PC-3 (cell line): ENCODE measurements at regions of chr4 and their contacts with region 1.

Region 1: GRCh38 chr4:91826186-91826585 is 477.6 kb upstream of the GRID2 start:
- DNase-seq: peak; percentile 92
- ATAC-seq: peak; percentile 99
- H3K4me3 ChIP-seq: peak overlapping the region; percentile 43
- H3K27ac ChIP-seq: peak overlapping the region; percentile 86
- H3K4me1 ChIP-seq: peaks cover 22% of the 10 kb centered on the region
- H3K27me3 ChIP-seq: no peaks in the 10 kb centered on the region
- CTCF ChIP-seq: no peak

Region 2: DNA sequence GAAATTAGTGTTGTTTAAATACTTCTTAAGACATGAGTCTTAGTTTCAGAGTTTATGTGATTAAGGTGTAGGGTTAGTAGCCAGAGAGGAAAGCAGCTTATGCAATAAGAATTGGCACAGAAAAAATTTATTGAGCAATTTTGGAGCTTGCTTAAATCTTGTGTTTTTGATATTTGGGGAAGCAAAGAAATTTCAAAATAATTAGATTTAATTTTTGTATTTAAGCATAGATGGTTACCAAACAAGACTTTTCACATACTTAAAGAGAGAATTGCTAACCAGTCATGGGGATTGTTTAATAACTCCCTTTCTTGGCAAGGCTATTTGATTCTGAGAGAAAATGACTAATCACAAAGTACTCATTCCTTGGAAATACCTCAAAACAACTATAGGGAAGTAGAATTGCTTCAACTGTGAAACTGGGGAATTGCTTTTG is 275.6 kb after region 1 on chr4:
- CTCF ChIA-PET with region 1: no interaction called
- POLR2A ChIA-PET with region 1: no interaction called
- intact Hi-C with region 1: loop called (anchors 2 kb)
- DNase-seq: peak; percentile 79
- ATAC-seq: peak; percentile 81
- H3K4me3 ChIP-seq: no peak overlapping the region
- H3K27ac ChIP-seq: peak overlapping the region; percentile 77
- H3K4me1 ChIP-seq: peaks cover 19% of the 10 kb centered on the region
- H3K27me3 ChIP-seq: no peaks in the 10 kb centered on the region
- CTCF ChIP-seq: no peak

Region 3: GRCh38 chr4:92421920-92422319 is 595.7 kb after region 1 on chr4:
- CTCF ChIA-PET with region 1: no interaction called
- POLR2A ChIA-PET with region 1: no interaction called
- intact Hi-C with region 1: no loop called
- DNase-seq: no peak
- ATAC-seq: no peak
- H3K4me3 ChIP-seq: no peak overlapping the region
- H3K27ac ChIP-seq: no peak overlapping the region
- H3K4me1 ChIP-seq: no peaks in the 10 kb centered on the region
- H3K27me3 ChIP-seq: no peaks in the 10 kb centered on the region
- CTCF ChIP-seq: no peak

Region 4: DNA sequence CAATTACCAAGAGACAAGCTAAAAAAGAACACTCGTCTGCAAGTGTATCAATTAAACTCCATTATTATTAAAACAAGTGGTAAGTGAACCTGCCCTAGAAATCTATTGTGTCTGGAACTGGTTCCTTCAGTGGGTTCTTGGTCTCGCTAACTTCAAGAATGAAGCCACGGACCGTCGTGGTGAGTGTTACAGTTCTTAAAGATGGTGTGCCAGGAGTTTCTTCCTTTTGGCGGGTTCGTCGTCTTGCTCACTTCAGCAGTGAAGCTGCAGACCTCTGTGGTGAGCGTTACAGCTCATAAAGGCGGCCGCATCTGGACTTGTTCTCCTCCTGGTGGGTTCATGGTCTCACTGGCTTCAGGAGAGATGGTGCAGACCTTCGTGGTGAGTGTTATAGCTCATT is 709.4 kb after region 1 on chr4:
- CTCF ChIA-PET with region 1: no interaction called
- POLR2A ChIA-PET with region 1: no interaction called
- intact Hi-C with region 1: no loop called
- DNase-seq: no peak
- ATAC-seq: no peak
- H3K4me3 ChIP-seq: no peak overlapping the region
- H3K27ac ChIP-seq: no peak overlapping the region
- H3K4me1 ChIP-seq: no peaks in the 10 kb centered on the region
- H3K27me3 ChIP-seq: no peaks in the 10 kb centered on the region
- CTCF ChIP-seq: no peak